ENCODE measurements at regions of chr14 and their contacts with region 1.

Region 1: GRCh38 chr14:92513204-92513973 is at the start of gene RIN3:
- DNase-seq: peak; percentile 61
- ATAC-seq: peak; percentile 67
- H3K4me3 Mint-ChIP-seq: peak within 1 kb of the TSS; percentile 80
- H3K27ac Mint-ChIP-seq: peak within 1 kb of the TSS; percentile 41
- H3K4me1 Mint-ChIP-seq: peaks cover 44% of the 10 kb centered on the region
- H3K27me3 Mint-ChIP-seq: no peaks in the 10 kb centered on the region
- CTCF ChIP-seq: no peak
- total RNA-seq, gene RIN3: 61.3 and 62.6 TPM in 2 replicates

Region 2: DNA sequence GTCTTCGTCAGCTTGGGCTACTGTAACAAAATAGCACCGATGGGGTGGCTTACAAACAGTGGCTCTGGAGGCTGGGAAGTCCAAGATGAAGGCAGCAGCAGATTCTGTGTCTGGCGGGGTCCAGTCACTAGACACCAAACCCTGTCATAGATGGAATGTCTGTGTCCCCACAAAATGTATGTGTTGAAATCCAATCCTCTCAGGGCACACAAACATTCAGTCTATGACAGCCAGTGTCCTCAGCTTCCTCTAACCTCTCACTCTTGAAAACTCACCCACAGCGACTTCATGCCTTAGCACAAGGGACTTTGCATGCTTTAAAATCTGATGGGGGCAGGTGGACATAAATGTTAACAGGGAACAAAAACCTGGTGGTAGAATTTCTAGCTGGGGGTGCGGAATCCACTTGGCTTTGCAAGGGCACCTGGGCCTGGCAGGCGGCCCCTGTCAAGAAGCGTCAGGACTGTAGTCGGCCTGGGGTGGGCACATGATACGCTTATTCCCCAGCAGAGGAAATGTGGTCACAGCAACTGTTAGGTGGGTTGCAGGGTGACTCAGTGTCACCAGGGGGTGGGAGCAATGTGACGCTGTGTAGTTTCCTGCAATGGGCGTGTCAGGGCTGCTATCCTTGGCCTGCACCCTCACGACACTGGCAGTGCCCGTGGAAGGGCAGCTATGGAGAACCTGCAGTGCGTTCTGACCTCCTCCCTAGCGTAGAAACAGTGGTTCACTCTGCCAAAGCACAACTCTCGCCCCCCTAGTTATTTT is 17.9 kb after region 1 on chr14:
- CTCF ChIA-PET with region 1: no interaction called
- POLR2A ChIA-PET with region 1: interaction called, 3 read pairs
- intact Hi-C with region 1: loop called (anchors 1 kb)
- DNase-seq: peak; percentile 41
- ATAC-seq: peak; percentile 89
- H3K4me3 Mint-ChIP-seq: peak overlapping the region; percentile 9
- H3K27ac Mint-ChIP-seq: peak overlapping the region; percentile 87
- H3K4me1 Mint-ChIP-seq: peaks cover 47% of the 10 kb centered on the region
- H3K27me3 Mint-ChIP-seq: no peaks in the 10 kb centered on the region
- CTCF ChIP-seq: no peak

Region 3: DNA sequence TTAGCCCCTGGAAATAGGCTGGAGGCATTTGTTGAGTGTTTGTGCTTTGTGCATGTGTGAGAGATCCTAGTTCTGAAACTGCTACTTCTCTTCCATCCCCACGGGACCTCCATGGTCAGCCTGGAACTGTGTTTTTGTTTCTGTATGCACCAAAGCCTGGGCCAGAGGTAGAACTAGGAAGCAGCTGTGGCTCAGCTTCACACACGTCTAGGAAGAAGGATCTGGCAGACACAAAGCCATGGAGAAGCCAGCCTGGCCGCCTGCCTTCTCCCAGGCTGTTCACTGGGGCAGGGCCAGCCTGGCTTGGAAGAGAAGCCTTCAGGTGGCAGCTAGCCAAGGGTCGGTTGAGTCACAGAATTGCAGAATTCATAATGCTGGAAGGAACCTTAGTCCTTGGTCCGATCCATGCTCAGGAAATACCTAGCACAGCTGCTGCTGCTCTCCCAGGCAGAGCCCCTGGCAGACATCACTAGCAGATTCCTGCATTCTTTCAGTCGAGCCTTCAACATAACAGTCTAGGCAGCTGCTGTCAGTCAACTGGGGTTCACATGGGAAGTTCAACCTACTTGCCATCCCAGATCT is 27.2 kb after region 1 on chr14:
- CTCF ChIA-PET with region 1: no interaction called
- POLR2A ChIA-PET with region 1: interaction called, 13 read pairs
- intact Hi-C with region 1: no loop called
- DNase-seq: no peak
- ATAC-seq: no peak
- H3K4me3 Mint-ChIP-seq: no peak overlapping the region
- H3K27ac Mint-ChIP-seq: no peak overlapping the region
- H3K4me1 Mint-ChIP-seq: peaks cover 45% of the 10 kb centered on the region
- H3K27me3 Mint-ChIP-seq: no peaks in the 10 kb centered on the region
- CTCF ChIP-seq: no peak

Region 4: GRCh38 chr14:92551044-92551841 is 37.9 kb after region 1 on chr14:
- CTCF ChIA-PET with region 1: no interaction called
- POLR2A ChIA-PET with region 1: no interaction called
- intact Hi-C with region 1: loop called (anchors 5 kb)
- DNase-seq: no peak
- ATAC-seq: peak; percentile 78
- H3K4me3 Mint-ChIP-seq: peak overlapping the region; percentile 55
- H3K27ac Mint-ChIP-seq: no peak overlapping the region
- H3K4me1 Mint-ChIP-seq: peaks cover 44% of the 10 kb centered on the region
- H3K27me3 Mint-ChIP-seq: peaks cover 7% of the 10 kb centered on the region
- CTCF ChIP-seq: no peak

Region 5: GRCh38 chr14:92577321-92577742 is 63.9 kb after region 1 on chr14:
- CTCF ChIA-PET with region 1: no interaction called
- POLR2A ChIA-PET with region 1: interaction called, 6 read pairs
- intact Hi-C with region 1: loop called (anchors 5 kb)
- DNase-seq: no peak
- ATAC-seq: peak; percentile 70
- H3K4me3 Mint-ChIP-seq: peak overlapping the region; percentile 78
- H3K27ac Mint-ChIP-seq: peak overlapping the region; percentile 84
- H3K4me1 Mint-ChIP-seq: peaks cover 56% of the 10 kb centered on the region
- H3K27me3 Mint-ChIP-seq: no peaks in the 10 kb centered on the region
- CTCF ChIP-seq: no peak

Measured in activated B cell treated with CpG ODN at 0.5 μM for 24 hours (primary cell).